PC-9 (cell line): ENCODE measurements at regions of chr22 and their contacts with region 1.

Region 1: GRCh38 chr22:41448189-41448808 is 1.7 kb upstream of the TOB2 start:
- DNase-seq: peak; percentile 93 to 99
- H3K4me3 ChIP-seq: peak overlapping the region; percentile 92
- H3K27ac ChIP-seq: peak overlapping the region; percentile 83
- H3K4me1 ChIP-seq: peaks cover 12% of the 10 kb centered on the region
- H3K27me3 ChIP-seq: no peaks in the 10 kb centered on the region
- CTCF ChIP-seq: no peak

Region 2: GRCh38 chr22:40950962-40951794 is 497.1 kb before region 1 on chr22 and contains the start of gene RBX1:
- CTCF ChIA-PET with region 1: no interaction called
- POLR2A ChIA-PET with region 1: no interaction called
- intact Hi-C with region 1: loop called (anchors 2 kb)
- DNase-seq: peak; percentile 91 to 98
- H3K4me3 ChIP-seq: peak within 1 kb of the TSS; percentile 83
- H3K27ac ChIP-seq: peak within 1 kb of the TSS; percentile 75
- H3K4me1 ChIP-seq: peaks cover 14% of the 10 kb centered on the region
- H3K27me3 ChIP-seq: no peaks in the 10 kb centered on the region
- CTCF ChIP-seq: no peak
- total RNA-seq, gene RBX1: 52.9 and 53.3 TPM in 2 replicates

Region 3: GRCh38 chr22:41285820-41286638 is 162.3 kb before region 1 on chr22 and contains the start of gene RANGAP1:
- CTCF ChIA-PET with region 1: no interaction called
- POLR2A ChIA-PET with region 1: interaction called, 10 read pairs
- intact Hi-C with region 1: loop called (anchors 1 kb)
- DNase-seq: peak; percentile 98
- H3K4me3 ChIP-seq: peak within 1 kb of the TSS; percentile 99
- H3K27ac ChIP-seq: peak within 1 kb of the TSS; percentile 93
- H3K4me1 ChIP-seq: peaks cover 58% of the 10 kb centered on the region
- H3K27me3 ChIP-seq: no peaks in the 10 kb centered on the region
- CTCF ChIP-seq: 0 out of 2 replicates have a peak, but pooled peaks have one; percentile 20
- total RNA-seq, gene RANGAP1: 142 and 160 TPM in 2 replicates

Region 4: GRCh38 chr22:41403532-41404318 is 44.6 kb before region 1 on chr22:
- CTCF ChIA-PET with region 1: no interaction called
- POLR2A ChIA-PET with region 1: interaction called, 21 read pairs
- intact Hi-C with region 1: no loop called
- DNase-seq: peak; percentile 82 to 83
- H3K4me3 ChIP-seq: no peak overlapping the region
- H3K27ac ChIP-seq: no peak overlapping the region
- H3K4me1 ChIP-seq: peaks cover 13% of the 10 kb centered on the region
- H3K27me3 ChIP-seq: no peaks in the 10 kb centered on the region
- CTCF ChIP-seq: peak; percentile 97

Region 5: GRCh38 chr22:41488596-41489385 is 40.5 kb after region 1 on chr22:
- CTCF ChIA-PET with region 1: no interaction called
- POLR2A ChIA-PET with region 1: interaction called, 12 read pairs
- intact Hi-C with region 1: no loop called
- DNase-seq: no peak
- H3K4me3 ChIP-seq: no peak overlapping the region
- H3K27ac ChIP-seq: no peak overlapping the region
- H3K4me1 ChIP-seq: no peaks in the 10 kb centered on the region
- H3K27me3 ChIP-seq: no peaks in the 10 kb centered on the region
- CTCF ChIP-seq: no peak

Region 6: GRCh38 chr22:41946629-41947423 is 498.5 kb after region 1 on chr22 and contains the start of gene CENPM:
- CTCF ChIA-PET with region 1: no interaction called
- POLR2A ChIA-PET with region 1: interaction called, 22 read pairs
- intact Hi-C with region 1: no loop called
- DNase-seq: peak; percentile 92 to 95
- H3K4me3 ChIP-seq: peak within 1 kb of the TSS; percentile 73
- H3K27ac ChIP-seq: no peak within 1 kb of the TSS
- H3K4me1 ChIP-seq: peaks cover 18% of the 10 kb centered on the region
- H3K27me3 ChIP-seq: no peaks in the 10 kb centered on the region
- CTCF ChIP-seq: no peak
- total RNA-seq, gene CENPM: 42.0 and 53.8 TPM in 2 replicates